Motor neuron (in vitro differentiated cells): ENCODE measurements at regions of chrX and their contacts with region 1.

Region 1: GRCh38 chrX:25156323-25156722 is 140.6 kb upstream of the ARX start:
- ATAC-seq: peak in 2 of 8 experiments; percentile 58 to 60
- H3K4me3 ChIP-seq: no peak overlapping the region
- H3K27ac ChIP-seq: no peak overlapping the region
- H3K4me1 ChIP-seq: no peaks in the 10 kb centered on the region

Region 2: GRCh38 chrX:25275159-25275558 is 118.8 kb after region 1 on chrX:
- in situ Hi-C with region 1: loop called in 1 of 9 experiments (anchors 25 kb)
- ATAC-seq: no peak
- H3K4me3 ChIP-seq: no peak overlapping the region
- H3K27ac ChIP-seq: no peak overlapping the region
- H3K4me1 ChIP-seq: no peaks in the 10 kb centered on the region